Activated T-helper 1 cell treated with anti-CD3 and anti-CD28 coated beads, Interleukin-12 subunit alpha, Interleukin-12 subunit beta, Interleukin-2, Interleukin-4 antibody, amounts not matched to agents 30 ng/mL and 10 ng/mL and 1 ng/mL, durations not matched to agents 14 hours and 24 hours and 36 hours (primary cell): ENCODE measurements at regions of chr9 and their contacts with region 1.

Region 1: GRCh38 chr9:91101611-91102168 is 260.0 kb downstream of the AUH start:
- DNase-seq: peak; percentile 85
- H3K4me3 Mint-ChIP-seq: peak overlapping the region; percentile 53
- H3K27ac Mint-ChIP-seq: peak overlapping the region; percentile 85
- H3K4me1 Mint-ChIP-seq: peaks cover 72% of the 10 kb centered on the region
- H3K27me3 Mint-ChIP-seq: peaks cover 8% of the 10 kb centered on the region

Region 2: DNA sequence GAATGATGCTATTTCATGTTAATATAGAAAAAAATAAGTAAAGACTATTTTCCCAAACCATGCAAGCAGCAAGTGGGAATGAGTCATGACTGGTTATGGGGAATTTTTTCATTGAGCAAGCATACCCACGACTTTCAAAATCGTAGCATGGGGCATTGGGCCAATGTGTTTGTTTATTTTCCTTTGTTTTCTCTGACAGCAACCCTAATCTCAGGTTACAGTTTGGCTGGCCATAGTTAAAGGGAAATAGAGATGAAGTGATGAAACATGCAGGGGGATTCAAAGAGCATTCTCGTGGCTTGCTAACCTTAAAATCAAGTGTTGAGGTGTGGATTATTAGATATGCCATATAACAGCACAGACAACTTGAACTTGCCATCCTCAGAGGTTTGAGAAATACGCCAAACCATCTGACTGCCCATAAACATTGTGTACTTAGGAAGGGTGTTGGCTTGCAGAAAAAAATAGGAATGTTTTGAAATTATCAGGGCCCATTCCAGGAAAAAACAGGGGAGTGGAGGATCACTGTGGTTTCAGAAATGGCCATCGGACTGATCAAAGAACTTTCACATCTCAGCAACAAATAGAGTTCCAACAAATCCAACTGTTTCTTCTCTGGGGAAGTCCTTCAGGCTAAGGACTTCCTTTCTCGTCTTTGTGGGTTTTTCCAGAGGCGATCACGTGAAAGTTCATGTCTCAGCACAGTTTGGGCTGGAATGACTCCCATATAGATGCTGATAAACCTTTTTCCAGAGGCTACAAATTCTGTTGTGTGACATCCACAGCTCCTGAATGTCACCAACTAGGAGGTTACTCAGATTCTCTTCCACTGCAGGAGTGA is 41.0 kb before region 1 on chr9:
- intact Hi-C with region 1: loop called (anchors 1 kb)
- DNase-seq: no peak
- H3K4me3 Mint-ChIP-seq: peak overlapping the region; percentile 6
- H3K27ac Mint-ChIP-seq: peak overlapping the region; percentile 70
- H3K4me1 Mint-ChIP-seq: peaks cover 40% of the 10 kb centered on the region
- H3K27me3 Mint-ChIP-seq: peaks cover 2% of the 10 kb centered on the region